PC-3 (cell line): ENCODE measurements at regions of chr12 and their contacts with region 1.

Region 1: DNA sequence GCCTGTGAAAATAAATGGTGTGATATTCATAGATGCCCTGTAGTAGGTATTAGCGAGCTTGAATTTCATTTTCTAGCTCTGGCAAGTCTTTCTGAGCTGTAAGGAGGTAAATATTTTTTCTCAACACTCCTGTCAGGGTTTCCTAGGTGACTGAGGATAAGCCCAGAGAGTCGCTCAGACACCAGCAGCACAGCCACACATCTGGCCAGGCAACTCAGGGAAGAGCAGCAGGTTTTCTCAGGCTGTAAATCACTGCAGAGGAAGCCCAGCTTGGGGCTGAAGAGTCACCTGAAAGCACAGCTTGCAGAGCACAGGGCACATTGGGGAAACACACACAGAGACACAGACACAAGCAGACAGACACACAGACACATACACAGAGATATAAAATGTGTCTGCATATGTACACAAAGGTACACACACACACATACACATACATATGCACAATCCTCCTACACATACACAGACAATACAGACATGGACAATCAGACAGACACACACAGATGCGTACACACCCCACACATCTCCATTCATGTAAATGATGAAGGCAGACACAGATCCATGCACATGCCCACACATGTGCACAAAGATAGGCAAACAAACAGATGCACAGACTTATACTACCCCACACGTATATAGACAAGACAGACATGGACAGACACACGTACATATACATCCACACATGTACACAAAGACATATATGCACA is 232.0 kb upstream of the TMTC1 start:
- DNase-seq: no peak
- ATAC-seq: no peak
- H3K4me3 ChIP-seq: no peak overlapping the region
- H3K27ac ChIP-seq: no peak overlapping the region
- H3K4me1 ChIP-seq: peaks cover 1% of the 10 kb centered on the region; the same call in 1 of the 2 replicates
- H3K27me3 ChIP-seq: no peaks in the 10 kb centered on the region
- CTCF ChIP-seq: no peak

Region 2: DNA sequence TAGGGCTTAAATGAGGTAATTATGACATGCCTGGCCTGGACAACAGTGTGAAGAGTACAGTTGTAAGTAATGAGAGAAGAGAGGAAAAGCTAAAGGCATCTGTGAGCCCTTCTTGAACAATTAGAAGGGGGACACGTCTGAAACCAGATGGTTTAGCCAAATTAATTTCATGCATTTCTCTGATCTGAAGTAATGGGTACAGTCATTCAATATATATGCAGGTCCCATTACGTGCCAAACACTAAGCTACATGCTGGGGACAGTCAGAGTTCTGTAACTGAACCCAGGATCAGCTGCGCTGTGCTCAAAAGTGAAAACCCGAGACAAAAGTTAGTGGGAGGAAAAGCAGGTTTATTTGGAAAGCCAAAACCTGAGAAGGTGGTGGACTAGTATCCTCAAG is 24.8 kb before region 1 on chr12:
- CTCF ChIA-PET with region 1: no interaction called
- POLR2A ChIA-PET with region 1: no interaction called
- intact Hi-C with region 1: loop called (anchors 2 kb)
- DNase-seq: no peak
- ATAC-seq: no peak
- H3K4me3 ChIP-seq: no peak overlapping the region
- H3K27ac ChIP-seq: no peak overlapping the region
- H3K4me1 ChIP-seq: no peaks in the 10 kb centered on the region
- H3K27me3 ChIP-seq: no peaks in the 10 kb centered on the region
- CTCF ChIP-seq: no peak